ENCODE measurements at regions of chr21 and their contacts with region 1.

Region 1: GRCh38 chr21:24785033-24785432 is 822.2 kb downstream of the MRPL39 start:
- DNase-seq: no peak
- ATAC-seq: no peak
- H3K4me3 ChIP-seq: no peak overlapping the region
- H3K27ac ChIP-seq: no peak overlapping the region
- H3K4me1 ChIP-seq: no peaks in the 10 kb centered on the region
- H3K27me3 ChIP-seq: no peaks in the 10 kb centered on the region
- CTCF ChIP-seq: no peak
- EP300 ChIP-seq: no peak
- POLR2A ChIP-seq: no peak
- RAD21 ChIP-seq: no peak

Region 2: DNA sequence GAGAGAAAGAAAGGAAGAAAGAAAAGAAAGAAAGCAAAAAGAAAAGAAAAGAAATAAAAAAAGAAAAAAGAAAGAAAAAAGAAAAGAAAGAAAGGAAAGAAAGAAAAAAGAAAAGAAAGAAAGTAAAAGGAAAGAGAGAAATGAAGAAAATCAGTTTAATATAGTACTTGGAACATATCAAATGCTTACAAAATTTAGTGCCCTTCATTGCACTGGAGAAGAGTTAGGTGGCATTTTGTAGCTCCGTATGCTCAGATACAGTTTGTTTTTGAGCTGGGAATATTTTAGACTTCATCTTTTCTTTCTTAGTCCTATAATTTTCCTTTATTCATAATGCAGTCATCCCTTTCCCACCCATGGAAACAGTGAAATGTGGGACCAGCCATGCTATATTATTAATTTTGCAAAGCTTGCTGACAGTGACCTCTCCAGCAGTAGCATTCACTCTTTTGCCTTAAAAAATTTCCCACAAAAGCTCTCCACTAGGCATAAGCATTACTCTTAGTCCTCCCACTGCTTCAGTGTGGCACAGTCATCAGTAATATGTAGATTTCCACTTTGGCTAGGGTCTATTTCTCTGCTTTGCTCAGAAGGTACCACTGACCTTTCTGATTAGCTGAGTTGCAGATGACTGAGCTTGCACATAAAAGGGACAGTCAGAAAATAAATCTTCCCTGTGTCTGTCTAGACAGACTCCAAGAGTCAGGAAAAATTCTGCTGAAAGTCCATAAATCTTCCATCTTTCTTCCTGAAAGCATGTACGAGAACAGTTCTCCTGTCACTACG is 1441.9 kb after region 1 on chr21:
- CTCF ChIA-PET with region 1: no interaction called
- POLR2A ChIA-PET with region 1: no interaction called
- in situ Hi-C with region 1: no loop called
- intact Hi-C with region 1: loop called (anchors 10 kb)
- DNase-seq: no peak
- ATAC-seq: no peak
- H3K4me3 ChIP-seq: no peak overlapping the region
- H3K27ac ChIP-seq: no peak overlapping the region
- H3K4me1 ChIP-seq: no peaks in the 10 kb centered on the region
- H3K27me3 ChIP-seq: no peaks in the 10 kb centered on the region
- CTCF ChIP-seq: no peak
- EP300 ChIP-seq: no peak
- POLR2A ChIP-seq: no peak
- RAD21 ChIP-seq: no peak

Measured in HepG2 (cell line).